Right ventricle myocardium inferior (tissue), 1 donor: ENCODE measurements at regions of chr13 and their contacts with region 1.

Region 1: GRCh38 chr13:80363890-80364503 is 23.1 kb upstream of the SPRY2 start:
- DNase-seq: no peak
- ATAC-seq: no peak

Region 2: GRCh38 chr13:79679334-79679733 is 684.7 kb before region 1 on chr13:
- intact Hi-C with region 1: loop called (anchors 2 kb)
- DNase-seq: peak; percentile 48
- ATAC-seq: peak; percentile 71

Region 3: GRCh38 chr13:79775830-79776229 is 588.2 kb before region 1 on chr13:
- intact Hi-C with region 1: loop called (anchors 2 kb)
- DNase-seq: no peak
- ATAC-seq: no peak

Region 4: GRCh38 chr13:80436571-80437169 is 72.7 kb after region 1 on chr13:
- intact Hi-C with region 1: loop called (anchors 5 kb)
- DNase-seq: no peak
- ATAC-seq: peak; percentile 94

Region 5: DNA sequence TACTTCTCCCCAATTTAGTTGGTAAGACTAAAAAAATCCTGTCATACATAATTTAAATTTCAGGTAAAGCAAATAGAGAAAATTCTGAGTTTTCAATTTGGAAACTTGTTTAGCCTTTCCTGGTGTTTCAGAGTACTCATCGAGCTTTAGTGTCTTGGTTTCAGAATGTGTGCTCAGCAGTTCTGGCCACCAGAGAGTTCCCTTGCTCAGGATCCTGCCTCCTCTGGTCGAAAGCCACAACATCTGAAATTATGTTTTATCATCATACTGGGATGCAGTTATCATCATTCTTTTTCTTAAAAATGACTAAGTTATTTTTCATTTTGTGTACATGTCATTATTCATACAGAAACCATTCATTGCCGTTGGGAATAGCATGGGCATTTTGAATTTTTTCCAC is 240.1 kb after region 1 on chr13:
- intact Hi-C with region 1: loop called (anchors 10 kb)
- DNase-seq: no peak
- ATAC-seq: peak; percentile 85